PC-3 (cell line): ENCODE measurements at regions of chr11 and their contacts with region 1.

Region 1: DNA sequence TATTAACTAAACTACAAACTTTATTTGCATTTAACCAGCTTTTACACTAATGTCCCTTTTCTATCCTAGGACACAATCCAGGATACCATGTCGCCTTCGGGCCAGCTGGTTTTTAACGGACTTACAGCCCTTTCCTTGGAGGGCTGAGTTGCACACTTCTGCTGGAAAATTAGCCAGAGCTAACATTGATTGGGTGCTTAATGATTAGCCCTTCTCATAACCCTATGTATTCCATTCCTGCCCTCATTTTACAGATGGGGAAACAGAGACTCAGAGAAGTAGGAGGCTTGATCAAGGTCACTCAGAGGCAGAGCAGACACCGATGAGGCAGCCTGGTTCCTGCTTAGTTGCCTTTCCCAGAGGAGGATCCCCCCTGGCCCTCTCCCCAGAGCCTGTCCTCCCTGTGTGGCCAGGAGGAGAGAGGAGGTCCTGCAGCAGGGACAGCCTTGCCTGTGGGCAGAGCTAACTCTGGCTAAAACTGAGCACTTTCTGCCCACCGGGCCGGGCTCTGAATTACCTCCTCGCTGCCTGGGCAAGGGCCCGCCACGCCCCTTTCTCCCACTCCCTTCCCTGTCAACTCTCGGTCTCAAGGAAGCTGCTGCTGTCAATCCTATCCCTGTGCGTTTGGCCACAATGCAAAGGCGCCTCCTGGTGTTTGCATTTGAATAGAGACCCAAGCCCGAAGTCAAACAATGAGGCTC is 59.6 kb upstream of the PAX6 start:
- DNase-seq: peak; percentile 67
- ATAC-seq: peak; percentile 48
- H3K4me3 ChIP-seq: no peak overlapping the region
- H3K27ac ChIP-seq: no peak overlapping the region
- H3K4me1 ChIP-seq: peaks cover 35% of the 10 kb centered on the region
- H3K27me3 ChIP-seq: no peaks in the 10 kb centered on the region
- CTCF ChIP-seq: peak; percentile 81

Region 2: GRCh38 chr11:31397239-31397834 is 473.4 kb before region 1 on chr11:
- CTCF ChIA-PET with region 1: no interaction called
- POLR2A ChIA-PET with region 1: no interaction called
- intact Hi-C with region 1: loop called (anchors 2 kb)
- DNase-seq: peak; percentile 56
- ATAC-seq: no peak
- H3K4me3 ChIP-seq: no peak overlapping the region
- H3K27ac ChIP-seq: no peak overlapping the region
- H3K4me1 ChIP-seq: no peaks in the 10 kb centered on the region
- H3K27me3 ChIP-seq: no peaks in the 10 kb centered on the region
- CTCF ChIP-seq: peak; percentile 75

Region 3: GRCh38 chr11:31509429-31510345 is 361.1 kb before region 1 on chr11 and contains the starts of genes ELP4 and IMMP1L:
- CTCF ChIA-PET with region 1: no interaction called
- POLR2A ChIA-PET with region 1: no interaction called
- intact Hi-C with region 1: loop called (anchors 5 kb)
- DNase-seq: peak; percentile 97
- ATAC-seq: peak; percentile 96
- H3K4me3 ChIP-seq: peak within 1 kb of the TSS; percentile 96
- H3K27ac ChIP-seq: peak within 1 kb of the TSS; percentile 27; the same call in 1 of the 2 replicates
- H3K4me1 ChIP-seq: peaks cover 29% of the 10 kb centered on the region
- H3K27me3 ChIP-seq: no peaks in the 10 kb centered on the region
- CTCF ChIP-seq: no peak
- total RNA-seq, gene ELP4: 19.4 and 19.9 TPM in 2 replicates
- total RNA-seq, gene IMMP1L: 13.5 and 31.4 TPM in 2 replicates

Region 4: GRCh38 chr11:31810779-31811647 is 59.7 kb before region 1 on chr11 and contains the start of gene PAX6:
- CTCF ChIA-PET with region 1: interaction called, 3 read pairs
- POLR2A ChIA-PET with region 1: interaction called, 3 read pairs
- intact Hi-C with region 1: loop called (anchors 2 kb)
- DNase-seq: peak; percentile 74
- ATAC-seq: peak; percentile 39
- H3K4me3 ChIP-seq: peak within 1 kb of the TSS; percentile 93
- H3K27ac ChIP-seq: peak within 1 kb of the TSS; percentile 57
- H3K4me1 ChIP-seq: peaks cover 36% of the 10 kb centered on the region
- H3K27me3 ChIP-seq: no peaks in the 10 kb centered on the region
- CTCF ChIP-seq: no peak
- total RNA-seq, gene PAX6: 14.6 and 25.7 TPM in 2 replicates

Region 5: GRCh38 chr11:32006799-32007388 is 136.1 kb after region 1 on chr11:
- CTCF ChIA-PET with region 1: interaction called, 6 read pairs
- POLR2A ChIA-PET with region 1: no interaction called
- intact Hi-C with region 1: loop called (anchors 2 kb)
- DNase-seq: peak; percentile 71
- ATAC-seq: peak; percentile 55
- H3K4me3 ChIP-seq: no peak overlapping the region
- H3K27ac ChIP-seq: no peak overlapping the region
- H3K4me1 ChIP-seq: peaks cover 15% of the 10 kb centered on the region
- H3K27me3 ChIP-seq: peaks cover 40% of the 10 kb centered on the region
- CTCF ChIP-seq: peak; percentile 79